ENCODE measurements at regions of chr2 and their contacts with region 1.

Region 1: GRCh38 chr2:109230941-109231420 is 102.0 kb downstream of the SH3RF3 start:
- DNase-seq: peak in 1 of 5 donors; percentile 68
- ATAC-seq: peak; percentile 80 to 88 (median 82)
- H3K4me3 ChIP-seq: no peak overlapping the region
- H3K27ac ChIP-seq: peak overlapping the region in 10 of 12 donors; percentile 8 to 70 (median 24)
- H3K4me1 ChIP-seq: peaks cover 0 to 43% (median 18%) of the 10 kb centered on the region in 12 donors
- H3K27me3 ChIP-seq: no peaks in the 10 kb centered on the region
- CTCF ChIP-seq: no peak
- POLR2A ChIP-seq: no peak

Region 2: DNA sequence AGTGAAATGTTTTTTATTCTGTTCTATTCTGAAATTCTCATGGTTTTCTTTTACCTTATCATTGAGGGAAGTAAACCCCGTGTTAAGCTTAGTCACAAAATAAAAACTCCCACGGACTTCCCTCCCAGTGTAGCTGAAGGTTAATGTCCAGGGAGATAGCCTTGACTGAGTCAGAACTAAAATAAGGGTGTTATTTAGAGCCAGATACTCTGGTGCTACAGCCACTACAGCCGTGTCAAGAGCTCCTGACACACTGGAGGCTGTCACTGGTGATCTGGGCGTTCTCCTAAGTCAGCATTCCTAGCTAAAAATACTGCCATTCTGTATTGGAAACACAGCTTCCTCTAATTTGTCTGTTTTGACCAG is 593.7 kb before region 1 on chr2:
- intact Hi-C with region 1: no loop called
- DNase-seq: peak in 4 of 5 donors; percentile 72 to 79 (median 78)
- ATAC-seq: peak; percentile 92 to 96 (median 94)
- H3K4me3 ChIP-seq: no peak overlapping the region
- H3K27ac ChIP-seq: peak overlapping the region; percentile 67 to 92 (median 84)
- H3K4me1 ChIP-seq: peaks cover 5 to 92% (median 63%) of the 10 kb centered on the region in 12 donors
- H3K27me3 ChIP-seq: no peaks in the 10 kb centered on the region
- CTCF ChIP-seq: no peak
- POLR2A ChIP-seq: no peak

Region 3: GRCh38 chr2:108845923-108846322 is 385.1 kb before region 1 on chr2:
- intact Hi-C with region 1: no loop called
- DNase-seq: no peak
- ATAC-seq: no peak
- H3K4me3 ChIP-seq: no peak overlapping the region
- H3K27ac ChIP-seq: no peak overlapping the region
- H3K4me1 ChIP-seq: no peaks in the 10 kb centered on the region
- H3K27me3 ChIP-seq: no peaks in the 10 kb centered on the region
- CTCF ChIP-seq: no peak
- POLR2A ChIP-seq: no peak

Region 4: GRCh38 chr2:109143214-109144187 is 87.5 kb before region 1 on chr2:
- intact Hi-C with region 1: no loop called
- DNase-seq: no peak
- ATAC-seq: no peak
- H3K4me3 ChIP-seq: no peak overlapping the region
- H3K27ac ChIP-seq: no peak overlapping the region
- H3K4me1 ChIP-seq: peaks cover 0 to 4% (median 0%) of the 10 kb centered on the region in 12 donors
- H3K27me3 ChIP-seq: no peaks in the 10 kb centered on the region
- CTCF ChIP-seq: no peak
- POLR2A ChIP-seq: no peak

Region 5: DNA sequence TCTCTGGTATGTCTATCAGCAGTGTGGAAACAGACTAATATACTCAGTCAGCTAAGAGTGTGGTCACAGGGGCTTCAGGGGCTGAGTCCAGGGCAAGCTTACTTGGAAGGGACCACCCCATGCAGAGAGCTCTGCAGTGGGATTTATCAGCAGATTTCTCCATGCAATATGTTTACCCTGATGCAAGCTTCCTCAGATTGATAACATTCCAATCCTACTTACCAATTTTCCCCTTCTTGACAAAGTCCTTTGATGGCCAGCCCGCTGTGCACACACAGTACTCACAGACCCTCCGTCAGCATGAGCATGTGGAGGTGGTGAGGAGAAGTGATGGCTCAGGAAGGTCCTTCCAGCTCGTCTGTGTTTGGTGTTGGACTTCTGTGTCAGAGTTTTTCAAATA is 50.2 kb before region 1 on chr2:
- intact Hi-C with region 1: loop called in 1 of 10 experiments (anchors 5 kb)
- DNase-seq: no peak
- ATAC-seq: no peak
- H3K4me3 ChIP-seq: no peak overlapping the region
- H3K27ac ChIP-seq: no peak overlapping the region
- H3K4me1 ChIP-seq: peaks cover 0 to 42% (median 18%) of the 10 kb centered on the region in 12 donors
- H3K27me3 ChIP-seq: no peaks in the 10 kb centered on the region
- CTCF ChIP-seq: no peak
- POLR2A ChIP-seq: no peak

Measured in heart left ventricle (tissue), 16 donors.